ENCODE measurements at regions of chr7 and their contacts with region 1.

Region 1: DNA sequence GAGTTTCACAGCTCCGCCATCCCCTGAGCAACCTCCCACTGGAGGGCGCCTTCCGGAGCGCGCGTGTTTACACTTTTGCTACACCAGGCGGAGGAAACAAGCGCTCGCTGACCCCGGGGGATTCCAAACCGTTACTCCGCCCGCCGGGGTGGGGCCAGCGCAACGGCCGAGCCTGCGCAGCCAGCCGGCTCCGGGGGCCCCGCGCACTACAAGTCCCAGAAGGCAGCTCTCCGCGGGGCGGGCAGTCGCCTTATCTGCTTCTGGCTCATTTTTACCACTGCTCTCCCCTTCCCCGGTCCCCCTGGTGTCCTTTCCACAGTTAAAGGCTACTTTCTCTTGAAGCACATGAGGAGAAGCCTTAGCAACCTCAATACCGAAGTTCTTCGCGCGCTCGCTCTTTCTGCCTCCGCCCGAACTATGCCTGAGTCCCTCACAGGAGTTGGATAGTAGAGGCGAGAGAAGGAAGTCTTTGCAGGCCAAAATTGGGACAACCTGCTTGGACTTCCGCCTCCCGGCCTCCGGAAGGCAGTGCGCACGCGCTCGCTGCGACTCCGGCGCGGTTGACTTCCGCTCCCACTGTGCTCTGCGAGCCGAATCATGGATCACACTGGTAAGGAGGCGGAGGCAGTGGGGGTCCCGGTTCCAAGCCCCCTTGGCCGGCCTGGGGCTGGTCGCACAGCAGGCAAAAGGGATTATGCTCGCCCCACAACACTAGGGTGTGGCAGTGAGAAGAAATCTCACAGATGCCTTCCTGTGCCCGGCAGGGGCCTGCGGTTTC is at the start of gene CBLL1:
- DNase-seq: peak; percentile 97
- H3K4me3 ChIP-seq: peak within 1 kb of the TSS; percentile 90
- H3K27ac ChIP-seq: peak within 1 kb of the TSS; percentile 95
- H3K4me1 ChIP-seq: peaks cover 51% of the 10 kb centered on the region
- CTCF ChIP-seq: peak; percentile 81
- total RNA-seq, gene CBLL1: 22.9 and 25.7 TPM in 2 replicates

Region 2: GRCh38 chr7:106865130-106866041 is 878.4 kb before region 1 on chr7 and contains the start of gene PIK3CG:
- CTCF ChIA-PET with region 1: no interaction called
- POLR2A ChIA-PET with region 1: no interaction called
- intact Hi-C with region 1: loop called (anchors 5 kb)
- DNase-seq: peak; percentile 87
- H3K4me3 ChIP-seq: peak within 1 kb of the TSS; percentile 82
- H3K27ac ChIP-seq: peak within 1 kb of the TSS; percentile 86
- H3K4me1 ChIP-seq: peaks cover 44% of the 10 kb centered on the region
- CTCF ChIP-seq: no peak
- total RNA-seq, gene PIK3CG: 21.1 and 22.8 TPM in 2 replicates

Region 3: DNA sequence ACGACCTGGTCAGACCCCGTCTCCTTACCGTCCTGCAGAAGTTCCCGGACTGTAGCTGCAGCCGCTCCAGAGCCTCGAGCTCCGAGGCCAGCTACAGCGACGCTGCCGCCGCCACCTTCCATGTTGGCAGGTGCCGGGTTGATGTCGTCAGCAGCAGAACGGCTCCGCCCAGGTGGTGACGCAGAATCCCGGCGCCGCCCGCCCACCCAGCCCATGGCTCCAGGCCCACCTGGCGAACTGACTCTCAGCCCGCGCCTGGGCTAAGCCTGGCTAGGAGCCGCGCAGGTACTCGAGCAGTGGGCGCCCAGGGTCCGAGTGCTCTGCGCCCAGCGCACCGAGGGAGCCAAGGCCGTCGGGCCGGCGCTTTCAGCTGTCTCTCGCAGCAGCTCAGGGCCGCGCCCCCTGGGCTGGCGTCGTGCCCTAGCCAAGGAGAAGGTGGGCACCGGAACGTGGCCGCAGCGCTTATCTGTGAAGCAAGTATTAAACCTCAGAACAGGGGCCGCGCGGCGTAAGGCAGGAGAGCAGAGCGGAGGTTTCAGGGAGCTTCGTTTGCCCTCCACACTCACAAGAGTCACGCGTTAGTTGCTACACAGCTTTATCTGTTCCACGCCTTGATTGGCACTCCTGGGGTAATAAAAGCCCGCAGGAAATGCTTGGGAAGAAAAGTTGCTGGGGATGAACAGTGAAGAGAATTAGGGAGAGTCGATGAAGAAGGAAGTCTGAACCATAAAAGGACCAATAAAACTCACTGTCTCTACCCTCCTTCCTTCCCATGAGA is 179.8 kb before region 1 on chr7 and contains the starts of genes COG5 and DUS4L:
- CTCF ChIA-PET with region 1: interaction called, 3 read pairs
- POLR2A ChIA-PET with region 1: interaction called, 9 read pairs
- intact Hi-C with region 1: loop called (anchors 1 kb)
- DNase-seq: peak; percentile 86
- H3K4me3 ChIP-seq: peak within 1 kb of the TSS; percentile 81
- H3K27ac ChIP-seq: peak within 1 kb of the TSS; percentile 57
- H3K4me1 ChIP-seq: peaks cover 50% of the 10 kb centered on the region
- CTCF ChIP-seq: no peak
- total RNA-seq, gene COG5: 59.0 and 60.2 TPM in 2 replicates
- total RNA-seq, gene DUS4L: 14.9 and 16.9 TPM in 2 replicates

Region 4: DNA sequence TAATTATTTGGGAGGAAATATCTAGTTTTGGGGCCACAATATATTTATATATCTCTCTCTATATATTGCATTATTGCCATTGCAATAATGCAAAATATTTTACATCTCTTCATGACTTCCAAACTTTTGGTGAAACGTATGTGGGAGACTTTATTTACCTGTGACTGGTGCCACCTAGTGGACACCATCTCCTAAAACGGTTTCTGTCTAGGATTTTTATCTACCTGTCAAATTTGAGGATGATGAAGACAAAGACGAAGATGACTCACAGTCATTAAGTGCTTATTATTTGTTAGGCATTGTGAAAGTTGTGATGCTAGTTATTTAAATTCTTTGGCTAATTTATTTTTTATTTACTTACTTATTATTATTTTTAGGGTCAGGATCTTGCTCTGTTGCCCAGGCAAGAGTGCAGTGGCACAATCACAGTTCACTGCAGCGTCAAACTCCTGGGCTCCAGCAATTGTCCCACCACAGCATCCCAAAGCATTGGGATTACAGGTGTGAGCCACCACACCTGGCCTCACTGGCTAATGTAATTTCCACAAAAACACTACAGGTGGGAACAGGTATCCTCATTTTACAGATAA is 18.5 kb before region 1 on chr7:
- CTCF ChIA-PET with region 1: no interaction called
- POLR2A ChIA-PET with region 1: interaction called, 17 read pairs
- intact Hi-C with region 1: no loop called
- DNase-seq: peak; percentile 72
- H3K4me3 ChIP-seq: no peak overlapping the region
- H3K27ac ChIP-seq: no peak overlapping the region
- H3K4me1 ChIP-seq: peaks cover 6% of the 10 kb centered on the region
- CTCF ChIP-seq: peak; percentile 89

Region 5: DNA sequence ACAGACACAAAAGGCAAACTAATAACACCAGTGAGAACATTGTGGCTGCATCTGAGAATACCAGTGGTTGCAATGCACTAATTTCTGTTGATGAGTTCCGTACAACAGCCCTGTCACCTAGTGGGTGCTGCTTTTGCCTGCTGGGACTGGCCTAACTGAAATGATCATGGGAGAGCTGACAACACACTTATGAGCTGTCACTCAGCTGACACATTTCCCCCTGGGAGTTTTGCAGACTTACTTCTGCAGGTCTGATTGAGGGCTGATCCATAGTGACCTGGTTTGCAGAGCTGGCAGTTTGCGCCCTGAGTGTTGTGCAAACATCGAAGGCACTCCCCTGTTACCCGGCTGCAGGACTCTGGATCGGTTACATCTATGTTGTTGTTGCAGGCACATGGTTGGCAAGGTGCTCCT is 319.8 kb after region 1 on chr7:
- CTCF ChIA-PET with region 1: no interaction called
- POLR2A ChIA-PET with region 1: no interaction called
- intact Hi-C with region 1: no loop called
- DNase-seq: no peak
- H3K4me3 ChIP-seq: no peak overlapping the region
- H3K27ac ChIP-seq: no peak overlapping the region
- H3K4me1 ChIP-seq: no peaks in the 10 kb centered on the region
- CTCF ChIP-seq: no peak

Region 6: GRCh38 chr7:108569381-108570145 is 825.8 kb after region 1 on chr7 and contains the starts of genes DNAJB9 and THAP5:
- CTCF ChIA-PET with region 1: no interaction called
- POLR2A ChIA-PET with region 1: no interaction called
- intact Hi-C with region 1: loop called (anchors 10 kb)
- DNase-seq: peak; percentile 99
- H3K4me3 ChIP-seq: peak within 1 kb of the TSS; percentile 81
- H3K27ac ChIP-seq: peak within 1 kb of the TSS; percentile 89
- H3K4me1 ChIP-seq: peaks cover 26% of the 10 kb centered on the region
- CTCF ChIP-seq: no peak
- total RNA-seq, gene DNAJB9: 20.3 and 22.4 TPM in 2 replicates
- total RNA-seq, gene THAP5: 23.5 and 24.2 TPM in 2 replicates